ENCODE measurements at regions of chr1 and their contacts with region 1.

Region 1: DNA sequence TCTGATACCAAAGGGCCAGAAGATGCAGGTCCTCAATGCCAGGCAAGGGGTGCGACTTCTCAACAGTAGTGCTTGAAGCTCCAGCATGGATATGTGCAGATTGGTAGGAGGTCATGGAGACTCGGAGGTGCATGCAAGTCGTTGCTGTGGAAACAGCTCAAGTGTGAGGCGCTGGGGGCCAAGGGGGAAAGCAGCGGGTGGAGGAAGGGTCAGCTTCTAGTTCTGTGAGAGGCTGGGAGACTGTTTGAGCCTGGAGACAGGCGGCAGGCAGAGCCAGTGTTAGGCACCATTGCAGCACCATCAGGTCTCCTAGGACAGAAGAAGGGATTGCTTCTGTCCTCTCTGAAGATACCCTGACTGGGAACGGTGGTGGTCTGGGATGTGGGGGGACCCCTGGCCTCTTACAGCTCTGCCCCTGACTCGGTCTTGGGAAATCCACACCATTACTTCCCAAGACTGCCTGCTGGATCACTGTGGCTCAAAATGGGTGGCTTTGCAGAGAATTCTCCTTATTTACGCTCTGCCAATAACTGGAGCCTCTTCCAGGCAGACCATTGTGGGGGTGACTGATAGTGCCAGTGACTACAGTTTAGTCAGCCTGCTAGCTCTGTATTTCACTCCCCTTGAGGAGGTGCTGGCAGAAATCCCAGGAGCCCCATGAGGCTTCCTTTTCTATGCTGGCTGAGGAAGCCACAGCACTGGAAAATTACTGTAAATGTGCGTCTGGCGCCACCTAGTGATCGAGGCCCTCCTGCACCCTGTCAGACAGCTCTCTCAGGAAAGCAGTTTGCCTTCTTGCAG is 46.3 kb upstream of the VANGL1 start:
- DNase-seq: peak; percentile 80
- H3K4me3 ChIP-seq: no peak overlapping the region
- H3K27ac ChIP-seq: no peak overlapping the region
- H3K4me1 ChIP-seq: no peaks in the 10 kb centered on the region
- H3K27me3 ChIP-seq: peaks cover 0 to 6% of the 10 kb centered on the region in 2 experiments
- CTCF ChIP-seq: peak; percentile 91 to 95
- POLR2A ChIP-seq: no peak

Region 2: DNA sequence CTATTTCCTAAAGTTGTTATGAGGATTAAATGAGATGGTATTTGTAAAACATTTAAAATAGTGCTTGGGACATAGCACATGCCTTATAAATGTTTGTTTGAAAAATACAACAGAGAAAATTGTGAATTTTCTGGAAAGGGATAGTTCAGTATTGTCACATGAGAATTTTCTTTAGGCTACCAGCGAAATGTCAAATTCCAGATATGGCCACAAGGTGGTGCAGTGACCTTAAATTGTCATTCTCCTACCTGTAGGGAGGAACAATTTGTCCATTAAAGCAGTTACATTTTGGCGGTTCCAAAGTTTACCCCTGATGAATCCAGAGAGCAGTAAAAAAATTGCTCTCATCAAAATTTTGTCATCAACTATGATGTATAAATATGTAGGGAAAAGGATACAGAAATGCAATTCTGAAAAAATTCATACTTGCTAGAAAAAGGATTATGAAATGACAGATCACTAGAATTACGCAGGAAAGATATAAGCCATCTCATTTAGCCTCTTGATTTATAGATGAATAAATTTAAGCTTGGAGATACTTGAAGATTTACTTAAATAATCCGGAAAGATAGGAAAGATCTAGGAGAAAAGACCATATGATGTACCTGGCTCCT is 616.1 kb before region 1 on chr1:
- CTCF ChIA-PET with region 1: interaction called, 5 read pairs
- POLR2A ChIA-PET with region 1: no interaction called
- dilution Hi-C with region 1: no loop called
- intact Hi-C with region 1: loop called (anchors 5 kb)
- DNase-seq: peak; percentile 54
- H3K4me3 ChIP-seq: no peak overlapping the region
- H3K27ac ChIP-seq: no peak overlapping the region
- H3K4me1 ChIP-seq: no peaks in the 10 kb centered on the region
- H3K27me3 ChIP-seq: peaks cover 0 to 14% of the 10 kb centered on the region in 2 experiments
- CTCF ChIP-seq: peak; percentile 50 to 60
- POLR2A ChIP-seq: no peak

Region 3: DNA sequence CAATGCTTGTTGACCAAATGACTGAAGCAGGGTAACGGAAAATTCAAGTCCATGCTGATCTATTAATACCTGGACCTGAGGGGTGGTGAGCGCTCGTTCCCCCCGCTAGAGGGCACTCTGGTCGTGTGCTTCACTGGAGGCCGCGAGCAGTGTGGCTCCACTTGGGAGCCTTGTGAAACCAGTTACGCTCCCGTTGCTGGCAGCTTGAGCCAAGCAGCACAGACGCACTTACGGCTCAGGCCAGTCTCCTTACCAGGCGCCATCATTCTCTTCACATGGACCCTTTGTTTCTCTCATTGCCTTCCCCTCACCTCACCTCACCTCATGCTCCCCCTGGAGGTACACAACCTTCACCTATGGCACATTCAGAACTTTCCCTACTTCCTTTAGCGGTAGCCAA is 456.5 kb before region 1 on chr1:
- CTCF ChIA-PET with region 1: interaction called, 259 read pairs
- POLR2A ChIA-PET with region 1: no interaction called
- dilution Hi-C with region 1: no loop called
- intact Hi-C with region 1: loop called (anchors 1 kb)
- DNase-seq: peak; percentile 79
- H3K4me3 ChIP-seq: no peak overlapping the region
- H3K27ac ChIP-seq: no peak overlapping the region
- H3K4me1 ChIP-seq: no peaks in the 10 kb centered on the region
- H3K27me3 ChIP-seq: peaks cover 0 to 2% of the 10 kb centered on the region in 2 experiments
- CTCF ChIP-seq: peak; percentile 90 to 92
- POLR2A ChIP-seq: no peak

Region 4: GRCh38 chr1:115469703-115470476 is 125.6 kb before region 1 on chr1:
- CTCF ChIA-PET with region 1: interaction called, 27 read pairs
- POLR2A ChIA-PET with region 1: no interaction called
- dilution Hi-C with region 1: no loop called
- intact Hi-C with region 1: loop called (anchors 1 kb)
- DNase-seq: peak; percentile 21
- H3K4me3 ChIP-seq: no peak overlapping the region
- H3K27ac ChIP-seq: no peak overlapping the region
- H3K4me1 ChIP-seq: no peaks in the 10 kb centered on the region
- H3K27me3 ChIP-seq: no peaks in the 10 kb centered on the region
- CTCF ChIP-seq: peak; percentile 85 to 88
- POLR2A ChIP-seq: no peak

Region 5: GRCh38 chr1:115537415-115537814 is 58.1 kb before region 1 on chr1:
- CTCF ChIA-PET with region 1: no interaction called
- POLR2A ChIA-PET with region 1: no interaction called
- dilution Hi-C with region 1: no loop called
- intact Hi-C with region 1: no loop called
- DNase-seq: no peak
- H3K4me3 ChIP-seq: no peak overlapping the region
- H3K27ac ChIP-seq: no peak overlapping the region
- H3K4me1 ChIP-seq: no peaks in the 10 kb centered on the region
- H3K27me3 ChIP-seq: no peaks in the 10 kb centered on the region
- CTCF ChIP-seq: no peak
- POLR2A ChIP-seq: no peak

Region 6: GRCh38 chr1:115609021-115609420 is 13.5 kb after region 1 on chr1:
- CTCF ChIA-PET with region 1: interaction called, 16 read pairs
- POLR2A ChIA-PET with region 1: no interaction called
- dilution Hi-C with region 1: no loop called
- intact Hi-C with region 1: no loop called
- DNase-seq: no peak
- H3K4me3 ChIP-seq: no peak overlapping the region
- H3K27ac ChIP-seq: no peak overlapping the region
- H3K4me1 ChIP-seq: no peaks in the 10 kb centered on the region
- H3K27me3 ChIP-seq: peaks cover 2 to 3% of the 10 kb centered on the region in 2 experiments
- CTCF ChIP-seq: no peak
- POLR2A ChIP-seq: no peak

Region 7: DNA sequence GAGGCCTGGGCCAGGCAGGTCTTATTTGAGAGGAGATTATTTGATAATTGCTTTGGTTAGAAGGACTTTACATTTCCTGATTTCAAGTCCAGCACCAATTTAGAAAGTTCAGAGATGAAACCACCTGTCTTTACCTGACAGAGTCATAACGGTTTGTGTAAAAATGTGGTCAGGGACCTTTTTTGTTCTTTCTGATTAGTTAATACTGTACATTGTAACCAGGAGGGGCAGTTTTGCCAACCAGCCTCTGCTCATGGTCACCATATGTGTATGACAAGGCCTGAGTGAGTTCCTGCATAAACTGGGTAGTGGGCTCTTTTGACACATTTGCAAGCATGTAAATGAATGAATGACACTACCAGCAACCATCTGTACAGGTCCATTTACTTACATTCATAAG is 102.1 kb after region 1 on chr1:
- CTCF ChIA-PET with region 1: no interaction called
- POLR2A ChIA-PET with region 1: no interaction called
- dilution Hi-C with region 1: no loop called
- intact Hi-C with region 1: no loop called
- DNase-seq: no peak
- H3K4me3 ChIP-seq: no peak overlapping the region
- H3K27ac ChIP-seq: no peak overlapping the region
- H3K4me1 ChIP-seq: no peaks in the 10 kb centered on the region
- H3K27me3 ChIP-seq: peaks cover 3 to 11% of the 10 kb centered on the region in 2 experiments
- CTCF ChIP-seq: no peak
- POLR2A ChIP-seq: no peak

Measured in endothelial cell of umbilical vein (primary cell).